ENCODE measurements at regions of chr14 and their contacts with region 1.

Region 1: GRCh38 chr14:40296821-40297220 is 864.6 kb upstream of the FBXO33 start:
- DNase-seq: no peak
- H3K4me3 Mint-ChIP-seq: no peak overlapping the region
- H3K27ac Mint-ChIP-seq: no peak overlapping the region
- H3K4me1 Mint-ChIP-seq: no peaks in the 10 kb centered on the region
- H3K27me3 Mint-ChIP-seq: no peaks in the 10 kb centered on the region

Region 2: DNA sequence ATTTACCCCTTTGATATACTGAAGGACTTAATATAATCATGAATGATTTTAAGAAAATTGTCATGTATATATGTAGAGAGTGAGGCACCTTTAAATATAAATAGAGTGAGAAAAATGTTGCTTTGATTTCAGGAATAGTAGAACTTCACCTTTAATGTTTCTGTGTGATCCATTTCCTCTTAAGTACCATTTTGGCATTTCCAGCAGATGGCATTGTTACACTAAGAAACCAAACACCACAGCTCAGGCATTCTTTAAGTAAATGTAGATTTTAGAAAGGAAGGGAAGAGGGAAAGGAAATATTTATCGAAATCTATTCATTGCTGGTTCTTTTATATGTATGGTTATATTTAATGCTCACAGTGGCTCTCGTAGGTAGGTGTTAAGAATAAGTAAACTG is 307.9 kb before region 1 on chr14:
- CTCF ChIA-PET with region 1: no interaction called
- intact Hi-C with region 1: loop called (anchors 5 kb)
- DNase-seq: no peak
- H3K4me3 Mint-ChIP-seq: no peak overlapping the region
- H3K27ac Mint-ChIP-seq: no peak overlapping the region
- H3K4me1 Mint-ChIP-seq: no peaks in the 10 kb centered on the region
- H3K27me3 Mint-ChIP-seq: no peaks in the 10 kb centered on the region